HepG2 (cell line): ENCODE measurements at regions of chr1 and their contacts with region 1.

Region 1: DNA sequence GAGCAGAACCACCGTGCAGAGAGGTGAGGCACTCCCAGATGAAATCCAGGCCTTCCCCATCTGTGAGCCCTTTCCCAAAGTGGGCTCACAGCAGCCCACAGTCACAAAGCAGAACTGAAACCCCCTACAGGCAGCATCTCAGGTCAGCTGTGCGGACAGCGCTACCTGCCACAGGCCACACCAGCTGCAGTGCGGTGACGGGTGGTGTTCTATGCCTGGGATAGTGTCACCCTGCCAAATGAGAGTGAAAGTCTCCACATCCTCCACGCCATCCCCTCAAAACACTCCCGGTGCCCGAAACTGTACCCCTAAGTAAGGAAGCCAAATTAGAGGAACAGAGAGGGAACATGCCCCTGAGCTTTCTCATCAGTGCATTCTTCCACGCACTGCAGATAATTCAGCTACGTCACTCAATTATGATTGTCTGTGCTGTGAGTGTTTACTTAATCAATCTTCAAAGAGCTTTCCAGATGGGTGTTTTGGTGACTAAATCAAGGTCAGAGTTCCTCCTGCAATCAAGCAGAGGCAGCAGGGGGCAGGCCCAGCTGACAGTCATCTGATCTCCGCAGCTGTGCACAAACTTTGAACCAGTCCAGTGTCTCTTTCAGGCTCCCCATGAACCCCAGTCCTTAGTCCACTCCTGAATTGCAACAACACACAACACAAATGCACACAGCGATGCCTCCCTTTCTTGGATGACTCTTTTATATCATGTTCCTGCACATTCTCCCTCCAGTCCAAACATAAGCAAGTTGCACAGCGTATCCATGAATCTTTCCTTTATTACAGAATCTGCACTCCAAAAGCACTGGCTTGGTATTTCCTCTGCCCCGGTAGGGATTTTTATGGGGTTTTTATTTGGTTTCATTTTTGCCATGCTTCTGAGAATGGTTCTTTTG is 150.0 kb downstream of the TOMM20 start:
- DNase-seq: peak; percentile 96
- ATAC-seq: peak; percentile 12
- H3K4me3 ChIP-seq: no peak overlapping the region
- H3K27ac ChIP-seq: peak overlapping the region; percentile 100
- H3K4me1 ChIP-seq: peaks cover 99% of the 10 kb centered on the region
- H3K27me3 ChIP-seq: no peaks in the 10 kb centered on the region; a peak in 1 of 5 replicates
- CTCF ChIP-seq: peak; percentile 62
- EP300 ChIP-seq: peak; percentile 78 to 96; a peak in 3 of 4 replicates
- POLR2A ChIP-seq: peak in 1 of 2 experiments; percentile 24; a peak in 1 of 4 replicates
- RAD21 ChIP-seq: peak; percentile 56; the same call in 1 of the 2 replicates

Region 2: GRCh38 chr1:234599617-234600417 is 378.8 kb before region 1 on chr1:
- CTCF ChIA-PET with region 1: no interaction called
- POLR2A ChIA-PET with region 1: interaction called, 37 read pairs
- in situ Hi-C with region 1: no loop called
- intact Hi-C with region 1: no loop called
- DNase-seq: peak; percentile 85
- ATAC-seq: peak; percentile 85
- H3K4me3 ChIP-seq: peak overlapping the region; percentile 13 to 51 (median 44); a peak in 4 of 6 replicates
- H3K27ac ChIP-seq: peak overlapping the region; percentile 100
- H3K4me1 ChIP-seq: peaks cover 41% of the 10 kb centered on the region
- H3K27me3 ChIP-seq: no peaks in the 10 kb centered on the region; a peak in 1 of 5 replicates
- CTCF ChIP-seq: 0 out of 2 replicates have a peak, but pooled peaks have one; percentile 13
- EP300 ChIP-seq: no peak; a peak in 1 of 4 replicates
- POLR2A ChIP-seq: peak; percentile 26 to 63
- RAD21 ChIP-seq: peak; percentile 81

Region 3: DNA sequence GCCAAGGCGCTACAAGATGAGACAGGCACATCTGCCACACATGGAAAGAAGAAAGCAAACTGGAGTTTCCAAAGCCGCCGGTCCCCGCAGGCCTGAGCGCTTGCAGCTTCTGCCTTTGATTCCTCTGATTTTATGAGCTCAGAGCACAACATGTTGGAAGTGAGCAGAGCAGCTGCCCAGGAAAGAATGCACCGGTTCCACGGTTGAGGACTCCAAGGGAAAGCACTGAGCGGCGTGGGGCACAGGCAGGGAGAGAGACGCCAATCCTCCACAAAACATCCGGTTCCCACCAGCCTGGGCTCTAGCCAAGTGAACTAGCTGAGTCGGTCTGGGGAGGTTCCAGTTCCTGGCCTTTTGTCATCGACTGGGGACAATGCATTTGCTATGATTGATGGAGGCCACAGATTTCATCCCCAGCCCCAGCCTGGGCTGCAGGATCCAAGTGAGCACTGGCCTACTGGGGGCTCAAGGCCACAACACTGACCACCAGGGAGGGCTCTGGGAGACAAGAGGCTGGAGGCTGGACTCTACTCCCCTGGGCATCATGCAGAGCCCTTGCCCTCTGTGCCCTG is 115.6 kb before region 1 on chr1:
- CTCF ChIA-PET with region 1: no interaction called
- POLR2A ChIA-PET with region 1: interaction called, 19 read pairs
- in situ Hi-C with region 1: no loop called
- intact Hi-C with region 1: no loop called
- DNase-seq: peak; percentile 65
- ATAC-seq: peak; percentile 86
- H3K4me3 ChIP-seq: peak overlapping the region; percentile 6 to 47 (median 27); a peak in 4 of 6 replicates
- H3K27ac ChIP-seq: peak overlapping the region; percentile 84
- H3K4me1 ChIP-seq: peaks cover 69% of the 10 kb centered on the region
- H3K27me3 ChIP-seq: no peaks in the 10 kb centered on the region
- CTCF ChIP-seq: no peak
- EP300 ChIP-seq: no peak; a peak in 1 of 4 replicates
- POLR2A ChIP-seq: peak in 1 of 2 experiments; percentile 37; a peak in 1 of 4 replicates
- RAD21 ChIP-seq: no peak

Region 4: DNA sequence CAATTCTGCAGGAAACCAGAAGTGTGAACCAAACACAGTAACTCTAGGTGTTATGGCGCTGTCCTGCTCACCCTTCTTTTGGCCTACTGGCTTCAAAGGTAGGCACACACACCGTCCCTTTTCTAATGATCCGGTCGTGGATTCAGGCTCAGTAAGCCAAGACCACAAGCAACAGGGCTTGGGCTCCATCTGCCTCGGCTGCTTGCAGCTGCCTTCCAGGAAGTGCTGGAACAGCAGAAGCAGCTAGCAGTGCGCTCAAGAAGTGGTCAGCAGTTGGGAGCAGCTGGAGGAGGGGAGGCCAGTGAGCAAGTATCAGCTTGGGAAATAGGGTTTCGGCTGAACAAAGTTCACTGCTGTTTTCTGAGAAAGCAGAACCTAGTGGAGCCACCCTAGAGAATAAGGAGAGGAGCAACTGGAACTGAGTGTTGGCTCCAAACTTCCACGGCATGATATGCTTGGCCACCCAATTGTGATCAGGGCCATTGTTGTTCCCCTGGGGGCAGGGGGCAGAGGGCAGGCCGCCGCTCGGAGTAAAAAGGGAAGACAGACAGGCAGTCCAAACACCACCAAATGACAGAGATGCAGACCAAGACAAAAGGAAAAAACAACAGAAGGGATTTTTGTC is 23.4 kb before region 1 on chr1:
- CTCF ChIA-PET with region 1: interaction called, 3 read pairs
- POLR2A ChIA-PET with region 1: interaction called, 657 read pairs
- in situ Hi-C with region 1: no loop called
- intact Hi-C with region 1: loop called (anchors 1 kb)
- DNase-seq: no peak
- ATAC-seq: peak; percentile 2; the same call in 1 of the 3 replicates
- H3K4me3 ChIP-seq: peak overlapping the region in 1 of 3 experiments; percentile 5; a peak in 1 of 6 replicates
- H3K27ac ChIP-seq: peak overlapping the region; percentile 100
- H3K4me1 ChIP-seq: peaks cover 85% of the 10 kb centered on the region
- H3K27me3 ChIP-seq: no peaks in the 10 kb centered on the region
- CTCF ChIP-seq: peak; percentile 5; the same call in 1 of the 2 replicates
- EP300 ChIP-seq: no peak; a peak in 1 of 4 replicates
- POLR2A ChIP-seq: 0 out of 4 replicates have a peak, but pooled peaks of 1 of the 2 experiments have one; percentile 36
- RAD21 ChIP-seq: 0 out of 2 replicates have a peak, but pooled peaks have one; percentile 10

Region 5: GRCh38 chr1:235022981-235023710 is 44.5 kb after region 1 on chr1:
- CTCF ChIA-PET with region 1: no interaction called
- POLR2A ChIA-PET with region 1: interaction called, 10 read pairs
- in situ Hi-C with region 1: no loop called
- intact Hi-C with region 1: no loop called
- DNase-seq: no peak
- ATAC-seq: no peak; the same call in 2 of the 3 replicates
- H3K4me3 ChIP-seq: no peak overlapping the region
- H3K27ac ChIP-seq: no peak overlapping the region
- H3K4me1 ChIP-seq: peaks cover 82% of the 10 kb centered on the region
- H3K27me3 ChIP-seq: no peaks in the 10 kb centered on the region; a peak in 1 of 5 replicates
- CTCF ChIP-seq: no peak
- EP300 ChIP-seq: no peak
- POLR2A ChIP-seq: no peak
- RAD21 ChIP-seq: no peak

Region 6: GRCh38 chr1:235075188-235075926 is 96.7 kb after region 1 on chr1:
- CTCF ChIA-PET with region 1: no interaction called
- POLR2A ChIA-PET with region 1: interaction called, 309 read pairs
- in situ Hi-C with region 1: loop called (anchors 5 kb)
- intact Hi-C with region 1: no loop called
- DNase-seq: peak; percentile 89
- ATAC-seq: peak; percentile 57
- H3K4me3 ChIP-seq: peak overlapping the region; percentile 56 to 82 (median 58)
- H3K27ac ChIP-seq: peak overlapping the region; percentile 99
- H3K4me1 ChIP-seq: peaks cover 91% of the 10 kb centered on the region
- H3K27me3 ChIP-seq: no peaks in the 10 kb centered on the region; a peak in 1 of 5 replicates
- CTCF ChIP-seq: no peak
- EP300 ChIP-seq: peak in 1 of 2 experiments; percentile 59; a peak in 2 of 4 replicates
- POLR2A ChIP-seq: peak in 1 of 2 experiments; percentile 80; a peak in 2 of 4 replicates
- RAD21 ChIP-seq: no peak